ENCODE measurements at regions of chr13 and their contacts with region 1.

Region 1: DNA sequence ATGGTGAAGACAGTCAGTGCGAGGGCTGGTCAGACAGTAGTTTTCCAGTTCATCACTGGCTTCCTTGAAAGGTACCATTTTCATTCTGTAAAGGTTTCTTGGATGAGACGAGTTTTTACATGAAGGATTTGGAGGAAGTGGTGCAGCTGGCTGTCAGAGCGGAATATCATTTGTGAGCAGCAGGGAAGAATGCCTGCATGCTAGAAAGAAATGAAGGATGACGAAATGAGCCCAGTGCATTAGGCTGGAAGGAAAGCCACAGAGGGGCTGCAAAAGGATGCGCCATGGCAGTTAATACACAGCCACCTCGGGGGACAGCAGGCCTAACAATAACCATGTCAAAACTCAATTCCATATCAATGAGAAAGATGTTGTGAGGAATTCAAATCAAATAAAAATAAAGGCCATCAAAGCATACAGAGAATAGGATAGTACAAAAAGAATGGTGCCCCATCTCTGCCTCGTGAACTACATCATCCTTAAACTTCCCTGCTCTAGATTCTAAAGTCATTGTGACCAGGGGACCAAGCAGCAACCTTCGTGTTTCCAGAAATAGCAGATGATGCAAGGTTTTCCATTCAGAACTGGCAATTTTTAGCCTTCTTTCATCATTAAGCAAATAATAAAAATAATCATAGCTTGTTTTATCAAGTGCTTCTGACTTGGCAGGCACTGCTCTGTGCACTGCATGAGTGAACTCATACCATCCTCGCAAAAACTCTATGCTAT is 504.2 kb downstream of the RFC3 start:
- DNase-seq: no peak
- ATAC-seq: peak; percentile 81

Region 2: DNA sequence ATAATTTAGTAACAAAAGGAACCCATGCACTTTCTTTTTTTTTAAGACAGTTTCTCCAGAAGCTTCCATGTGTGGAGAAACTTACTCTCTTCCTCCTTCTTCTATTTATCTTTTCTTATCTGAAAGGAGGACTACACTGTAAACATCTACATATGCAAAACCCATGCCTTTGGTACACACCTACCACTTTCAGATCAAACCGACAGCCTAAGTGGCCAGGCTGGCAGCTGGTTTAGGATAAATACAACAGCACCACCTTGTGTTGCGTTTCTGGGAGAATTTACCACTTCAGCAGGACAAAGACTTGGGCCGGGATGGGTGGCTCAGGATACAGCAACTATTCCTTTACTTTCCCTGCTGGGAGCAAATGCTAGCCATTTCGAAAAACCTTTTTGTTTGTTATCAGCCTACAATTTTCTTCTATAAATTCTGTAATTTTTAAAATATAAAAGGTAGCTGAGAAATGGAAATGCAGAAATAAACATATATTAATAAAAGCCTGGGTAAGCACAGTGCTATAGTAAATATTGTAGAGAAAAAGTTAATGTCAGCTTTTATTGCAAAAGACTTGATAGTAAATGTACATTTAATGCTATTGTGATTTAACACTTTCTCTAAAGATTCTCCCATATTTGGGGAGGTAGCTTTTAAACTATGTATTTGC is 598.3 kb before region 1 on chr13:
- intact Hi-C with region 1: no loop called
- DNase-seq: peak; percentile 65
- ATAC-seq: peak; percentile 85

Region 3: GRCh38 chr13:34869696-34870095 is 547.5 kb after region 1 on chr13:
- intact Hi-C with region 1: loop called (anchors 10 kb)
- DNase-seq: no peak
- ATAC-seq: no peak

Measured in left ventricle myocardium superior (tissue), 1 donor.